Breast epithelium (tissue), 4 donors: ENCODE measurements at regions of chr5 and their contacts with region 1.

Region 1: DNA sequence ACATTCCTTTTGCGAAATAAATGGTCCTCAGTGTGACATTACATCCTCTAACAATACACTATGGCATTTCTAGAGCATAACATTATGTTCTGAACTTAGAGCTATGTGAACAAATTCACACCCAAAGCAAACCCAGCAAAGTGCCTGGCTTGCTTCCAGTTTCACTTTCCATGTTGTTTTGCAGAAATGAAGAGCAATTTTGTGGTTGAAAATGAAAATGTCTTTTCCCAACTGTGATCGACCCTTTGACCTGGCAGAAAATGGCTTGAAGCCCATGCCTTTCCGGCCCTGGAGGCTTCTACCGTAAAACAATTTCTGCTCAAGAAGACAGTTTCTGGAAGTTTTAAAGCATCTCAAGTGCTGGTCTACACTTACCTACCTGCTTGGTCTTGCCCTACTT is 344.7 kb upstream of the RGMB start:
- DNase-seq: peak in 1 of 2 donors; percentile 25
- H3K4me3 ChIP-seq: no peak overlapping the region
- H3K27ac ChIP-seq: no peak overlapping the region
- H3K4me1 ChIP-seq: no peaks in the 10 kb centered on the region
- H3K27me3 ChIP-seq: no peaks in the 10 kb centered on the region
- CTCF ChIP-seq: no peak
- POLR2A ChIP-seq: no peak

Region 2: DNA sequence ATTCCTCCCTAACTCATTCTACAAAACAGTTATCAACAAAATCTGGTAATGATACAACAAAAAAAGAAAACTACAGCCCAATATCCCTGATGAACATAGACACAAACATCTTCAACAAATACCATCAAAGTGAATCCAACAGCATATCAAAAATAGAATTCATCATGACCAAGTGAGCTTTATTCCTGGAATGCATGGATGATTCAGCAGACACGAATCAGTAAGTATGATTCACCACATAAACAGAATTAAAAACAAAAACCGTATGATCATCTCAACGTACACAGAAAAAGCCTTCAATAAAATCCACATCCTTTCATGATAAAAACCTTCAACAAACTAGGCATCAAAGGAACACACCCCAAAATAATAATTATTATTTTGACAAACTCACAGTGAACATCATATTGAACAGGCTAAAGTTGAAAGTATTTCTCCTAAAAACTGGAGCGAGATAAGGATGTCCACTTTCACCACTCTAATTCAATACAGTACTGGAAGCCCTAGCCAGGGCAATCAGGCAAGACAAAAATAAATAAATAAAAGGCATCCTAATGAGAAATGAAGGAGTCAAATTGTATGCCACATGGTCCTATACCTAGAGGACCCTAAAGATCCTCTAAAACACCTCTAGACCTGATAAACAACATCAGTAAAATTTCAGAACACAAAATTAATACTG is 39.5 kb after region 1 on chr5:
- intact Hi-C with region 1: loop called (anchors 2 kb)
- DNase-seq: no peak
- H3K4me3 ChIP-seq: no peak overlapping the region
- H3K27ac ChIP-seq: no peak overlapping the region
- H3K4me1 ChIP-seq: no peaks in the 10 kb centered on the region
- H3K27me3 ChIP-seq: no peaks in the 10 kb centered on the region
- CTCF ChIP-seq: no peak
- POLR2A ChIP-seq: no peak